ENCODE measurements at regions of chr9 and their contacts with region 1.

Region 1: DNA sequence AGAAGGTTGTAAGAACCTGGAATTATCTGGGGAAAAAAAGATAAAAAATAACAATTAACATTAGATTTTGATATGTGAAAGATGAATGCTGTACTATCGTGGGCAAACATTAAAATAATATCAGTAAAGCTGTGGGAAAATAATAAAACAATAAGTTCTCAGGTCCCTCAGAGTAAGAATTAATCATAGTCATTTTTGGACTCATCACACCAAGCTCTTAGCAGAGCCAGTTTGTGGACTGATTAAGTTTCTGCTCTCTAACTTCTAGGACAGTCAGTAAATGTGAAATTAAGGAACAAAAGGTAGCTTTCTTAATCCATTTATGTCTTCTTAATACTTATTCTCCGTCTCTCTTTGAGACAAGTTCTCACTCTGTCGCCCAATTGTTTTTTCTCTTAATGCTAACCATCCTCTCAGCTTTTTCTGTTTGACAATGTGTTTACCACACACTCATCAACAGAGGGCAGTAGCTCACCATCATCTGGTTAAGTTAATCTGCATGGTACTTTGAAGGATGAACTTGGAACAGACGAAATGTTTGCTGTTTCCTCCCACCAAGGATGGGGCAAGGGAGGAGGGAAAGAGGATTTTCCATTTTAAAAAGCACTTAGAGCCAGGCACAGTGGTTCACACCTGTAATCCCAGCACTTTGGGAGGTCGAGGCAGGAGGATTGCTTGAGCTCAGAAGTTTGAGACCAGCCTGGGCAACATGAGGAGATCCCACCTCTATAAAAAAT is 5.3 kb upstream of the ACO1 start:
- DNase-seq: no peak
- H3K4me3 ChIP-seq: no peak overlapping the region
- H3K27ac ChIP-seq: no peak overlapping the region
- H3K4me1 ChIP-seq: peaks cover 0 to 8% (median 1%) of the 10 kb centered on the region in 4 experiments; a peak in 2 of 7 replicates
- H3K27me3 ChIP-seq: peaks cover 2 to 15% (median 8%) of the 10 kb centered on the region in 4 experiments
- CTCF ChIP-seq: peak in 2 of 3 experiments; percentile 78 to 87; a peak in 3 of 4 replicates
- EP300 ChIP-seq: no peak
- POLR2A ChIP-seq: no peak
- RAD21 ChIP-seq: peak; percentile 94

Region 2: GRCh38 chr9:32264170-32264862 is 114.8 kb before region 1 on chr9:
- CTCF ChIA-PET with region 1: interaction called, 10 read pairs
- POLR2A ChIA-PET with region 1: no interaction called
- DNase-seq: peak in 1 of 2 experiments; percentile 10
- H3K4me3 ChIP-seq: no peak overlapping the region
- H3K27ac ChIP-seq: no peak overlapping the region
- H3K4me1 ChIP-seq: no peaks in the 10 kb centered on the region; a peak in 2 of 7 replicates
- H3K27me3 ChIP-seq: no peaks in the 10 kb centered on the region; a peak in 1 of 7 replicates
- CTCF ChIP-seq: peak; percentile 65 to 78 (median 75)
- EP300 ChIP-seq: no peak
- POLR2A ChIP-seq: no peak
- RAD21 ChIP-seq: peak; percentile 81 to 86

Region 3: GRCh38 chr9:32304495-32304894 is 74.7 kb before region 1 on chr9:
- CTCF ChIA-PET with region 1: no interaction called
- POLR2A ChIA-PET with region 1: no interaction called
- DNase-seq: no peak
- H3K4me3 ChIP-seq: no peak overlapping the region
- H3K27ac ChIP-seq: no peak overlapping the region
- H3K4me1 ChIP-seq: peaks cover 0 to 6% (median 3%) of the 10 kb centered on the region in 4 experiments; a peak in 3 of 7 replicates
- H3K27me3 ChIP-seq: no peaks in the 10 kb centered on the region
- CTCF ChIP-seq: no peak
- EP300 ChIP-seq: no peak
- POLR2A ChIP-seq: no peak
- RAD21 ChIP-seq: no peak

Region 4: DNA sequence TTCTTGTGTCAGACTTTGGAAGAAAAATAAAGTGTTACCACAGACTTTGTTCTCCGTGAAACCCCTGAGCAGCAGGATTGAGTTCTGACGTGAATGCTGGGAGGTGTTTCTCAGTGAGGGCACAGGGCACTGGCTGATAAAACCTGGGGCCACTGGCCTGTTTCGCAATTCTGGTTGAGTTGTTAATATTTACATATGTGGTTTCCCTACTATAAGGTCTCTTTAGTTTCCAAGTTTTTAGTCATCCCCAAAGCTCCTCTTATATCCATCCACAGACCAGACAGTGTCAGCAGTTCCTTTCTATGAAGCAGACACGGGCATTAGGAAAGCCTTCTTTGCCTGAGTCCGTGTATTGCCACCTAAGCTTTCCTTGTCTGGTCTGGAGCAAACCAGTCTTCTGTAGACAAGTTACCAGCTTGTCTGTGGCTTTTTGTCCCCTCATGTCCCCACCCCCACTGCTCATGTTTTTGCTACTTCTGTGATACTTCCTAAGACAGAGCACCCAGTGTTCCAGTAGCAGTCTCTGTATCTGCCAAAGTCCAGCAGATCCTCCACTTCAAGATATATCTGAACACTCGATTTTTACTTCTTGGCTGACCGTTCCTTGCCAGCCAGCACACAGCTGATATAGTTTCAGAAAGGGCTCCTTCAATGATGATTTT is 47.2 kb after region 1 on chr9:
- CTCF ChIA-PET with region 1: interaction called, 91 read pairs
- POLR2A ChIA-PET with region 1: no interaction called
- DNase-seq: no peak
- H3K4me3 ChIP-seq: no peak overlapping the region
- H3K27ac ChIP-seq: no peak overlapping the region
- H3K4me1 ChIP-seq: no peaks in the 10 kb centered on the region
- H3K27me3 ChIP-seq: peaks cover 0 to 1% (median 0%) of the 10 kb centered on the region in 4 experiments; a peak in 1 of 7 replicates
- CTCF ChIP-seq: no peak
- EP300 ChIP-seq: no peak
- POLR2A ChIP-seq: no peak
- RAD21 ChIP-seq: no peak

Region 5: DNA sequence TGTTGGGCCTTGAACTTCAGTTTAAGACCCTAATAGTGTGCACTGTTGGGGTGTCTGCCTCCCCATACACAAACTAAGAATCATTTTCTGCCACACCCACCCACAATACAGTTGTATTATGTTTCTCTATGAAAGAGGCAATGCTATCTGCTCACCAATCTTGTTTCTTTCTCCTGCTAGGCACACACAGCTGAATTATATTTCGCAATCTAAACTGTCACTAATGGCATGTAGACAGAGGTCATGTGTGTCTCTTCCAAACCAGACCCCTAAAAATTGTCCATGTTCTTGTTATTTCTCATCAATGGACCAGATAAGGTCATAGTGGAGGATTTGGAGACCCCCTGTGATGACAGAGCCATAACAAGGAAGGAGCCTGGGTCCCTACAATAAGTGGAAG is 89.6 kb after region 1 on chr9:
- CTCF ChIA-PET with region 1: interaction called, 13 read pairs
- POLR2A ChIA-PET with region 1: no interaction called
- DNase-seq: no peak
- H3K4me3 ChIP-seq: no peak overlapping the region
- H3K27ac ChIP-seq: no peak overlapping the region
- H3K4me1 ChIP-seq: no peaks in the 10 kb centered on the region
- H3K27me3 ChIP-seq: no peaks in the 10 kb centered on the region
- CTCF ChIP-seq: no peak
- EP300 ChIP-seq: no peak
- POLR2A ChIP-seq: no peak
- RAD21 ChIP-seq: no peak

Region 6: GRCh38 chr9:32526041-32526706 is 147.0 kb after region 1 on chr9 and contains the start of gene RIGI:
- CTCF ChIA-PET with region 1: interaction called, 59 read pairs
- POLR2A ChIA-PET with region 1: interaction called, 3 read pairs
- DNase-seq: peak; percentile 47 to 80
- H3K4me3 ChIP-seq: peak within 1 kb of the TSS; percentile 67 to 90 (median 82)
- H3K27ac ChIP-seq: peak within 1 kb of the TSS; percentile 53
- H3K4me1 ChIP-seq: peaks cover 0 to 5% (median 2%) of the 10 kb centered on the region in 4 experiments; a peak in 3 of 7 replicates
- H3K27me3 ChIP-seq: no peaks in the 10 kb centered on the region
- CTCF ChIP-seq: peak in 2 of 3 experiments; percentile 36 to 59; a peak in 2 of 4 replicates
- EP300 ChIP-seq: no peak
- POLR2A ChIP-seq: peak in 1 of 2 experiments; percentile 74; a peak in 1 of 3 replicates
- RAD21 ChIP-seq: peak; percentile 45 to 59
- total RNA-seq, gene RIGI: 6.6 and 6.7 TPM in 2 replicates

Region 7: GRCh38 chr9:32550562-32551433 is 171.6 kb after region 1 on chr9:
- CTCF ChIA-PET with region 1: interaction called, 12 read pairs
- POLR2A ChIA-PET with region 1: interaction called, 14 read pairs
- DNase-seq: peak; percentile 95 to 97
- H3K4me3 ChIP-seq: peak overlapping the region; percentile 80 to 97 (median 87)
- H3K27ac ChIP-seq: peak overlapping the region; percentile 89
- H3K4me1 ChIP-seq: peaks cover 0 to 3% (median 0%) of the 10 kb centered on the region in 4 experiments; a peak in 2 of 7 replicates
- H3K27me3 ChIP-seq: no peaks in the 10 kb centered on the region
- CTCF ChIP-seq: peak in 1 of 3 experiments; percentile 13; a peak in 1 of 4 replicates
- EP300 ChIP-seq: peak in 1 of 2 experiments; percentile 9; a peak in 1 of 3 replicates
- POLR2A ChIP-seq: peak; percentile 49 to 86
- RAD21 ChIP-seq: no peak

Region 8: GRCh38 chr9:32589083-32589723 is 210.0 kb after region 1 on chr9:
- CTCF ChIA-PET with region 1: interaction called, 30 read pairs
- POLR2A ChIA-PET with region 1: no interaction called
- DNase-seq: no peak
- H3K4me3 ChIP-seq: no peak overlapping the region
- H3K27ac ChIP-seq: no peak overlapping the region
- H3K4me1 ChIP-seq: no peaks in the 10 kb centered on the region
- H3K27me3 ChIP-seq: no peaks in the 10 kb centered on the region
- CTCF ChIP-seq: peak in 2 of 3 experiments; percentile 50 to 54; a peak in 3 of 4 replicates
- EP300 ChIP-seq: no peak
- POLR2A ChIP-seq: no peak
- RAD21 ChIP-seq: peak; percentile 64 to 74